ENCODE measurements at regions of chr10 and their contacts with region 1.

Region 1: DNA sequence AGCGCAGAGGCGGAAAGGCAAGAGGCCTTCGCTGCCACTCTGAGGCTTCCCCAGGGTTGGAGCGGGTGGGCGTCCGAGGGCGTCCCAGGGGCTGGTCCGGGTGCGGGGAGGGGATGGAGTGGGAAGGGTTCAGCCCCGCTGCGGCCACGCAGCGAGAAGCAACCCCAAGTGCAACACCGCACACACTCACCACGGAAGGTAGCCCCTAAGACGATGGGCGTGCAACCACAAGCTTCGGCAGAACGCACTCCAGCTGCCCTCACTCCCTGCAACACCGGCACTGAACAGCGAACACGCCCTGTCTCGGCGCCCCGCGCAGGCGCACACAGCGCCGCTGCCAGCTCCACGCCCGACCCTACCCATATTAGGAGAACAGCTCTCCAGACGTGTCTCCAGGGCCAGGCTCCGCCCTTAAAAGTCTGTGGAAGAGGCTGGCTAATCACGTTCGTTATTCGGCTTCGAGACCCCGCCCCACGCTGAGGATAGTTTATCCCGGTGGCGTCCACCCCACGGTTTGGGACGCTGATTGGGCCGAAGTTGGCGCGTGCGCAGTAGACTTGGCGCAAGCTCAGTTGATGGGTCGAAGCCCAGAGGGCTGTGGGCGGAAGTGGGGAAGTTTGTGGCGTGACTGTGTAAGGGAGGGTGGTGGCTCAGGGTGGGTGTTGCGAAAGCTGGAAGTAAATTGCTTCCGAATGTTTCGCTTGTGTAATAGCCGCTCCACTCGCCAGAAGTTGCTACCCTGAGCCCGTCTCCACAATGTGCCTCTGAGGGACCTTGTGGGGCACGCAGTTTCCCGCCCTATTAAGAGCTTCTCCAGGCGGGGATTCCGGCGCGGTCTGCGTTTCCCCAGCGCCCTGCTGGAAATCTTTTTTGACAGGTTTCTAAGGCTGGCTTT is at the start of gene RSU1:
- DNase-seq: peak; percentile 100
- ATAC-seq: peak; percentile 99
- total RNA-seq, gene RSU1: 56.1 TPM

Region 2: GRCh38 chr10:16436758-16437539 is 380.4 kb before region 1 on chr10 and contains the start of gene PTER:
- intact Hi-C with region 1: loop called (anchors 10 kb)
- DNase-seq: peak; percentile 99
- ATAC-seq: peak; percentile 100
- total RNA-seq, gene PTER: 23.0 TPM

Region 3: GRCh38 chr10:16606421-16606820 is 211.0 kb before region 1 on chr10:
- intact Hi-C with region 1: no loop called
- DNase-seq: no peak
- ATAC-seq: no peak

Region 4: DNA sequence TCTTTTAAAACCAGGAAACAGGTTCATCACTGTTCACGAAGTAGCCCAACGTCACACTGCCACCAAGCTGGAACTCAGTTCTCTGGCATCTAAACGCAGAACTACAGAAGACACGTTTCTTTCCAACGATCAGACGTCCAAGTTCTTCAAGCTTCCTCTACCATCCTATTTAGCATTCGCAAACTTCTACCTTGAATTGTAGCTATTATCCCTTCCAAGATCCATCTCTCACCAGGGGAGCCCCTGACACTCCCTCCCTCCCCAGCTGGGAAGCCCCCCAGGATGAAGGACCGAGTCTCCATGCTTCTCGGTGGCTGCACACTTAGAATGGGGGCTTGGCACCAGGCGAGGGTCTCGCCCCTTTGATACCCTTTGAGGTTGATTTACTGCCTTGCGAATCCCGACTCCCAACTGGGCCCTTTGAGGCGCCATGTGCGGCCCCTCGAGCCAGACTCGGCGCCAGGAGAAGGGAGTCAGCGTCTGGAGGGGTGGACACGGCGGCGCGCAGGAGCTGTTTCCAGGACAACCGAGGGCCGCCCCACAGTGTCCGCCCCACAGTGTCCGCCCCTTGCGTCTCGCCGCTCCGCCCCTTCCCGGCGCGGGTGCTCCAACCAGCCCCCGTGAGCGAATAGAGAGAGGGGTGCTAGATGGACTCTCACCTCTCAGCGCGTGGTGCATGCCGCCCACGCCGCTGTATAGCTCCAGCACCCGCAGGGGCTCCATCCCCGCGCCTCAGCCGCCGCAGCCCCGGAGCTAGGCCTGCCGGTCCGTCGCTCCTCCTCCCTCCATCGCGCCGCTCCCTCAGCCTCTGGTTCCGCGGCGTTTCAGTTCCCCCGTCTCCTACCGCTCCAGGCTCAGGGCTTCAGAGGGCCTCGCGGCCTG is 383.8 kb after region 1 on chr10 and contains the start of gene TRDMT1:
- intact Hi-C with region 1: no loop called
- DNase-seq: peak; percentile 94
- ATAC-seq: peak; percentile 100
- total RNA-seq, gene TRDMT1: 4.5 TPM